CD14-positive monocyte (primary cell): ENCODE measurements at regions of chr22 and their contacts with region 1.

Region 1: DNA sequence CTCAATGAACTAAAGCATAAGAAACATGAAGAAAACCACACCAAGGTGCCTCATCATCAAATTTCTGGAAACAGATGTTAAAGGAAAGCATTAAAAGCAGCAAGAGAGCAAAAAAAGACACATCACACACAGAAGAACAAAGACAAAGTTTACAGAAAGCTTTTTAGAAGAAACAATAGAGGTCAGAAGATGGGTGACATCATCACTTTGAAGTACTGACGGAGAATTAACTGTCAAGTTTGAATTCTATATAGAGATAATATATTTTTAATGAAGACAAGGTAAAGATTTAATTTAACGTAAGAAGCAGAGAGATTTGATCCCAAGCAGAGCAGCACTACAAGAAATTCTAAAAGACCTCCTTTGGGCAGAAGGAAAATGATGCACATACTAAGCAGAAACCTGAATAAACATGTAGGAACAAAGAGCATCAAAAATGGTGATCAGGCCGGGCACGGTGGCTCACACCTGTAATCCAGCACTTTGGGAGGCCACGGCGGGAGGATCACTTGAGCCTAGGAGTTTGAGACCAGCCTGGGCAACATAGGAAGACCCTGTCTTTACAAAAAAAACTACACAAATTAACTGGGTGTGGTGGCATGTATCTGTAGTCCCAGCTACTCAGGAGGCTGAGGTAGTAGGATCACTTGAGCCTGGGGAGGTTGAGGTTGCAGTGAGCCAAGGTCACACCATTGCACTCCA is 63.3 kb upstream of the RTL6 start:
- DNase-seq: no peak
- H3K4me3 ChIP-seq: no peak overlapping the region
- H3K4me3 Mint-ChIP-seq: peak overlapping the region in 1 of 2 donors; percentile 35
- H3K27ac ChIP-seq: no peak overlapping the region
- H3K27ac Mint-ChIP-seq: peak overlapping the region in 2 of 7 donors; percentile 20 to 23
- H3K4me1 ChIP-seq: no peaks in the 10 kb centered on the region
- H3K4me1 Mint-ChIP-seq: no peaks in the 10 kb centered on the region
- H3K27me3 ChIP-seq: peaks cover 0 to 3% of the 10 kb centered on the region in 2 donors
- H3K27me3 Mint-ChIP-seq: peaks cover 4 to 14% (median 7%) of the 10 kb centered on the region in 3 donors
- CTCF ChIP-seq: no peak

Region 2: GRCh38 chr22:44597616-44598015 is 36.3 kb after region 1 on chr22:
- intact Hi-C with region 1: no loop called
- DNase-seq: no peak
- H3K4me3 ChIP-seq: no peak overlapping the region
- H3K4me3 Mint-ChIP-seq: no peak overlapping the region
- H3K27ac ChIP-seq: no peak overlapping the region
- H3K27ac Mint-ChIP-seq: no peak overlapping the region
- H3K4me1 ChIP-seq: peaks cover 9 to 22% of the 10 kb centered on the region in 2 donors
- H3K4me1 Mint-ChIP-seq: peaks cover 27% of the 10 kb centered on the region
- H3K27me3 ChIP-seq: peaks cover 0 to 19% of the 10 kb centered on the region in 2 donors
- H3K27me3 Mint-ChIP-seq: peaks cover 30 to 31% (median 30%) of the 10 kb centered on the region in 3 donors
- CTCF ChIP-seq: no peak

Region 3: DNA sequence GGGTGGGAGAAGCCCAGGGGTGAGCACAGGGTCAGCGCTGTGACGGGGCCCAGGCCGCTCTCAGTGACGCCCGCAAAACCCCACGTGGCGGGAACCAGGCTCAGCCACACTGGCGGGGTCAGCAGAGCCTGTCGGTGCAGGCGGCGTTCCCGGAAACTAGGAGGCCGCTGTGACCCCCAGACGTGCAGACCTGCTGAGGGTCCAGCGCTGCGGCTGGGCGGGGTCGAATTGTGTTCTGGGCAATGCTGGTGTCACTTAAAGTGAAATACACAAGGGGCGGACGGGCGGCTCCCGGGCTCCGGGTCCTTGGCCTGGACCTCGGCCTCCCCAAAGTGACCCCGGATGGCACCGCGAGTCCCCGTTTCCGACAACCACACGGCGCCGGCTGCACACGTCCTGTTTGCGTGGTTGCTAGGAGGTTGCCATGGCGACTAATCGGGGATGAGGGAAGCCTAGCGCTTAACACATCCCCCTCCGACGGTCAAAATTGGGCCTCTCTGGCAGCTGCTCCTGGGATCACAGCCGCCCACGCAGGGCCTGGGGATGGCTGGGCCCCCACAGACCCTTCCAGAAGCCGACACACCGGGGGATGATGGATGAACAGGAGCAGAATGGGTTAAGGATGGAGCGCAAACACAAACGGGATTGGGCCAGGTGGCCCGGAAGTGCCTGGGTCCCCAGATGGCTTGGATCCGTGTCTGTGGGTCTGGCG is 59.0 kb after region 1 on chr22:
- intact Hi-C with region 1: loop called in 1 of 2 experiments (anchors 5 kb)
- DNase-seq: peak; percentile 80 to 91 (median 87)
- H3K4me3 ChIP-seq: no peak overlapping the region
- H3K4me3 Mint-ChIP-seq: peak overlapping the region in 1 of 2 donors; percentile 59
- H3K27ac ChIP-seq: peak overlapping the region in 1 of 2 donors; percentile 41
- H3K27ac Mint-ChIP-seq: peak overlapping the region in 2 of 7 donors; percentile 88 to 94
- H3K4me1 ChIP-seq: peaks cover 7 to 14% of the 10 kb centered on the region in 2 donors
- H3K4me1 Mint-ChIP-seq: peaks cover 4% of the 10 kb centered on the region
- H3K27me3 ChIP-seq: peaks cover 0 to 19% of the 10 kb centered on the region in 2 donors
- H3K27me3 Mint-ChIP-seq: peaks cover 4 to 16% (median 6%) of the 10 kb centered on the region in 3 donors
- CTCF ChIP-seq: no peak